ENCODE measurements at regions of chr9 and their contacts with region 1.

Region 1: DNA sequence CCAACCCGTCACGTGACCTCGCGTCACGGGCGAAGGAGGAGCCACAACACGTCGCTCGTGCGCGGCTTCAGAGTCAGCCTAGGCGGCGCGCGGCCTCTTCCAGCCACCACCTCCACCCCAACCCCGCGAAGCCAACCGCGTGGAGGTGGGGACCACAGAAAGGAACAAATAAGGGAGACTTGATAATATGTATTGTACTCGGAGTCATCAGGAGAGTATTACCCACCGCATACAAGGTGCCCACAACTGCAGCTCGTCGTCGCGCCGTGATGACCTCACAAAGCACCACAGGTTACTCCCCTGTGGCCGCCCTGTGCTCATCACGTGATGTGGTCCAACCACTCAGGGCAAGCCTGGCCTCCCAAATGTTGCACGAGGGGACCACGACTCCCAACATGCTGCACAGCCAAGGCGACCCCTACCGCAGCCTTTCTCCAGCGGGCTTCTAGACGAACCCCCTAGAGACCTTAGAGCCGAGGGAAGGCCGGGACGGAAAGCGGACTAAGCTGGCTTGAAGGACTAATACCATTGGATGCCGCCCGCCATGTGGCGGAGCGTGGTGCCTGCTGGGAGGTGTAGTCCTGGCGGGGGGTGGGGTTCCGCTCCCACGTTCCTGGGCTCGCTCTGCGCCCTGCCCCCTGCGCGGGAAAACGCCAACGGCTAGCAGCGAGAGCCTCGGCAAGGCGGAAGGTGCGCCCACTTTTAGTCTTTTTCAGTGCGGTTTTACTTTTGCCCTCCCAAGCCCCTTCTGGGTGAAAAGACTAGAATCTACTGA is 423 bp upstream of the UBAP2 start:
- H3K4me3 ChIP-seq: peak overlapping the region; percentile 87
- H3K27ac ChIP-seq: peak overlapping the region; percentile 88
- H3K4me1 ChIP-seq: 0 out of 2 replicates have a peak, but pooled peaks cover 2% of the 10 kb centered on the region
- CTCF ChIP-seq: peak; percentile 34

Region 2: DNA sequence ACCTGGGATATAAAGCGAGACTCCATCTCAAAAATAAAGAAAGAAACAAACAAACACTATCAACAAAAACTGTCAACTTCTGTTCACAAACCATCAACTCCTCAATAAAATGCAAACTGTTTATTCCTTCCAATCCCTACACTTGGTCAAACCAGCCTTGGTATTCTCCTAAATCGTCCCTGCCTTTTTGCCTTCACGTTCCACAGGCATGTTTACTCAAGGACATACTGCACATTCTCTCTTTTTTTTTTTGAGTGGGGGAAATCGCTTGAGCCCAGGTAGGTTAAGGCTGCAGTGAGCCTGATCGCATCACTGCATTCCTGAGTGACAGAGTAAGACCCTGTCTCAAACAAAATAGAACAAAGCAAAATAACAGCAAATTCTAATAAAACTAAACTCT is 13.5 kb before region 1 on chr9:
- CTCF ChIA-PET with region 1: interaction called, 5 read pairs
- POLR2A ChIA-PET with region 1: interaction called, 11 read pairs
- H3K4me3 ChIP-seq: no peak overlapping the region
- H3K27ac ChIP-seq: no peak overlapping the region
- H3K4me1 ChIP-seq: peaks cover 7% of the 10 kb centered on the region; the same call in 1 of the 2 replicates
- CTCF ChIP-seq: no peak